ENCODE measurements at regions of chr1 and their contacts with region 1.

Region 1: GRCh38 chr1:26145041-26145959 is 13.6 kb upstream of the FAM110D start:
- DNase-seq: peak; percentile 70 to 76 (median 72)
- H3K4me3 ChIP-seq: no peak overlapping the region
- H3K4me3 Mint-ChIP-seq: peak overlapping the region in 2 of 8 donors; percentile 58 to 66
- H3K27ac ChIP-seq: no peak overlapping the region
- H3K27ac Mint-ChIP-seq: peak overlapping the region in 2 of 7 donors; percentile 22 to 36
- H3K4me1 ChIP-seq: peaks cover 8% of the 10 kb centered on the region
- H3K4me1 Mint-ChIP-seq: peaks cover 4 to 7% (median 5%) of the 10 kb centered on the region in 4 donors
- H3K27me3 ChIP-seq: no peaks in the 10 kb centered on the region
- H3K27me3 Mint-ChIP-seq: peaks cover 6 to 8% of the 10 kb centered on the region in 2 donors

Region 2: DNA sequence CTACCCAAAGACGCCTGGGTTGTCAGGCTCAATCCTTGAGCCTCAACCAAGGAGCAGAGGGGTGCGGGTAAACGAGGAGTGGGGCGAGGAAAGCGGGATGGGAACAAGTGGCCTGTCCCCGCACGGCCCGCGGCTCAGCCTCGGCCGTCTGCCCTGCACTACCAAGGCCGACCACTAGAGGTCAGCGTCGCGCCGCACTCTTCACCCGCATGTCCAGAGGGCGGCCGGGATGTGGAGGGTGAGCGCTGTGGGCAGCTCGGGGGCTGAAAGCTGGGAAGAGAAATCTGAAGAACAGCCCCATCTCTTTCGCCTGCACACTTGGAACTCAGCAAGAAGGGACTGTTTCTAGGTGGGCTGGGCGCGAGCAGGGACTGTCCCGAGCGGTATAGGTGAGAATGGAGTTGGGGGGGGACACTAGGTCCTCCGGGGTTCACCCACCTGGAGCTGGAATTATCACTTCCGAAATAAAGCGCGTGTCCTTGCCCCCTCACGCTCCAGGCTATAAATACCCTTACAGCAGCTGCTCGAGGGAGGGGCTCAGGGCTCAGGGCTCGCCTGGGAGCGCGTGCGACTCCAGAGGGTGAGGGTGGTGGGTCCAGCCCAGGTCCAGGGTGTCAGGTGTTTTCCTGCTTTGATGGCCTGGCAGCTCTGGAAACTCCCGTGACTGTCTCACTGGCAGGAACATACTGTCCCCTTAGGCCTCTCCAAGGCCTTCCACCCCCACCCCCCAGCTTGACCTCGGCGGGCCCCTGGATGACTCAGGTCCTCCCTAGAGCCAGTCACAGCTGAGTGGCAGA is 109.1 kb before region 1 on chr1:
- CTCF ChIA-PET with region 1: interaction called, 18 read pairs
- POLR2A ChIA-PET with region 1: interaction called, 3 read pairs
- intact Hi-C with region 1: loop called (anchors 1 kb)
- DNase-seq: peak; percentile 67 to 81 (median 69)
- H3K4me3 ChIP-seq: peak overlapping the region; percentile 48 to 84
- H3K4me3 Mint-ChIP-seq: peak overlapping the region; percentile 94 to 99 (median 95)
- H3K27ac ChIP-seq: peak overlapping the region; percentile 77
- H3K27ac Mint-ChIP-seq: peak overlapping the region; percentile 89 to 97 (median 95)
- H3K4me1 ChIP-seq: peaks cover 15% of the 10 kb centered on the region
- H3K4me1 Mint-ChIP-seq: peaks cover 2 to 21% (median 11%) of the 10 kb centered on the region in 4 donors
- H3K27me3 ChIP-seq: no peaks in the 10 kb centered on the region
- H3K27me3 Mint-ChIP-seq: peaks cover 2 to 3% of the 10 kb centered on the region in 2 donors

Region 3: DNA sequence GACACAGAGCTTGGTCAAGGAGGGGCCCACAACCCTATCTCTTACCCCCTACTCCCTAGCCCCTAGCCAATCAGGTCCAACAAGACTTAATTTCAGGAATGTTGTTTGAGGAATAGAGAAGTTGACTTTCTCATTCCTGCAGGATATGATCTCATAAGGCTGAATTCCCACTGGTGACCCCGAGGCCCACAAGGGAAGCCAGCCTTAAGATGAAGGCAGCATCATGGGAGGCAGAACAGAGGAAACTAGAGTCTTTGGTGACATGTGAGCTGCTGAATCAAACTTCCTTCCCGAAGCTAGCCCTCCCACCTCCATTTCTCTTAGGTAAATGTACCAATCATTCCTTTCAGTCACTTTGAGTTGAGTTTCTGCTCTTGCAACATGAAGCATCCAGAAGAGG is 42.8 kb before region 1 on chr1:
- CTCF ChIA-PET with region 1: interaction called, 296 read pairs
- POLR2A ChIA-PET with region 1: interaction called, 22 read pairs
- intact Hi-C with region 1: loop called (anchors 1 kb)
- DNase-seq: no peak
- H3K4me3 ChIP-seq: no peak overlapping the region
- H3K4me3 Mint-ChIP-seq: no peak overlapping the region
- H3K27ac ChIP-seq: no peak overlapping the region
- H3K27ac Mint-ChIP-seq: peak overlapping the region in 1 of 7 donors; percentile 17
- H3K4me1 ChIP-seq: no peaks in the 10 kb centered on the region
- H3K4me1 Mint-ChIP-seq: peaks cover 3 to 5% (median 4%) of the 10 kb centered on the region in 4 donors
- H3K27me3 ChIP-seq: no peaks in the 10 kb centered on the region
- H3K27me3 Mint-ChIP-seq: peaks cover 1 to 2% of the 10 kb centered on the region in 2 donors

Region 4: GRCh38 chr1:26111530-26112406 is 33.5 kb before region 1 on chr1 and contains the start of gene PDIK1L:
- CTCF ChIA-PET with region 1: interaction called, 296 read pairs
- POLR2A ChIA-PET with region 1: interaction called, 14 read pairs
- intact Hi-C with region 1: no loop called
- DNase-seq: peak; percentile 93 to 94 (median 94)
- H3K4me3 ChIP-seq: peak within 1 kb of the TSS; percentile 49 to 91
- H3K4me3 Mint-ChIP-seq: peak within 1 kb of the TSS; percentile 92 to 96 (median 95)
- H3K27ac ChIP-seq: peak within 1 kb of the TSS; percentile 77
- H3K27ac Mint-ChIP-seq: peak within 1 kb of the TSS; percentile 88 to 98 (median 94)
- H3K4me1 ChIP-seq: peaks cover 34% of the 10 kb centered on the region
- H3K4me1 Mint-ChIP-seq: peaks cover 15 to 41% (median 32%) of the 10 kb centered on the region in 4 donors
- H3K27me3 ChIP-seq: no peaks in the 10 kb centered on the region
- H3K27me3 Mint-ChIP-seq: no peaks in the 10 kb centered on the region
- total RNA-seq, gene PDIK1L: 20.1 to 25.0 TPM

Region 5: GRCh38 chr1:26126321-26127084 is 18.8 kb before region 1 on chr1:
- CTCF ChIA-PET with region 1: interaction called, 199 read pairs
- POLR2A ChIA-PET with region 1: interaction called, 48 read pairs
- intact Hi-C with region 1: loop called (anchors 1 kb)
- DNase-seq: peak; percentile 86 to 94 (median 90)
- H3K4me3 ChIP-seq: peak overlapping the region in 1 of 2 donors; percentile 47
- H3K4me3 Mint-ChIP-seq: peak overlapping the region; percentile 79 to 92 (median 86)
- H3K27ac ChIP-seq: peak overlapping the region; percentile 55
- H3K27ac Mint-ChIP-seq: peak overlapping the region; percentile 83 to 99 (median 96)
- H3K4me1 ChIP-seq: peaks cover 63% of the 10 kb centered on the region
- H3K4me1 Mint-ChIP-seq: peaks cover 32 to 51% (median 42%) of the 10 kb centered on the region in 4 donors
- H3K27me3 ChIP-seq: no peaks in the 10 kb centered on the region
- H3K27me3 Mint-ChIP-seq: no peaks in the 10 kb centered on the region

Region 6: DNA sequence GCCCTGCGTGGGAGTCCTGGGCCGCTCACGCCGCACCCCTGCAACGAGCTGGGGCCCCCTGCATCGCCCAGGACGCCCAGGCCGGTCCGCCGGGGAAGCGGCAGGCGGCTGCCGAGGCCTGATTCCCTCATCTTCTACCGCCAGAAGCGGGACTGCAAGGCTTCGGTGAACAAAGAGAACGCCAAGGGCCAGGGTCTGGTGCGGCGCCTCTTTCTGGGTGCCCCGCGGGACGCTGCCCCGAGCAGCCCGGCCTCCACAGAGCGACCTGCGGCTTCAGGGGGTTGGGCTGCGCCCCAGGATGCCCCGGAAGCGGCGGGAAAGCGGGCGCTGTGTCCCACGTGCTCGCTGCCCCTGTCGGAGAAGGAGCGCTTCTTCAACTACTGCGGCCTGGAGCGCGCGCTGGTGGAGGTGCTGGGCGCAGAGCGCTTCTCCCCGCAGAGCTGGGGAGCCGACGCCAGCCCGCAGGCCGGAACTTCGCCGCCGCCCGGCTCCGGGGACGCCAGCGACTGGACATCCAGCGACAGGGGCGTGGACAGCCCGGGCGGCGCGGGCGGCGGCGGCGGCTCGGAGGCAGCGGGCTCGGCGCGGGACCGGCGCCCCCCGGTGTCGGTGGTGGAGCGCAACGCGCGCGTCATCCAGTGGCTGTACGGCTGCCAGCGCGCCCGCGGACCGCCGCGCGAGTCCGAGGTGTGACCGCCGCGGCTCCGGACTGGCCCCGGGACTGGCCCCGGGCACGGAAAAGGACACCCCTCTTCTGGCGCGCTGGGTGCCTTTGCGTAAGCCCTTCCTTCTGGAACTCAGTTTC is 16.3 kb after region 1 on chr1:
- CTCF ChIA-PET with region 1: interaction called, 11 read pairs
- POLR2A ChIA-PET with region 1: no interaction called
- intact Hi-C with region 1: loop called (anchors 1 kb)
- DNase-seq: peak in 4 of 5 donors; percentile 20 to 35 (median 26)
- H3K4me3 ChIP-seq: no peak overlapping the region
- H3K4me3 Mint-ChIP-seq: peak overlapping the region in 7 of 8 donors; percentile 40 to 74 (median 59)
- H3K27ac ChIP-seq: no peak overlapping the region
- H3K27ac Mint-ChIP-seq: no peak overlapping the region
- H3K4me1 ChIP-seq: peaks cover 16% of the 10 kb centered on the region
- H3K4me1 Mint-ChIP-seq: peaks cover under 1 to 11% (median 8%) of the 10 kb centered on the region in 4 donors
- H3K27me3 ChIP-seq: peaks cover 7% of the 10 kb centered on the region
- H3K27me3 Mint-ChIP-seq: peaks cover 14 to 27% of the 10 kb centered on the region in 2 donors

Measured in CD4-positive, alpha-beta memory T cell (primary cell).